ENCODE measurements at regions of chr2 and their contacts with region 1.

Region 1: DNA sequence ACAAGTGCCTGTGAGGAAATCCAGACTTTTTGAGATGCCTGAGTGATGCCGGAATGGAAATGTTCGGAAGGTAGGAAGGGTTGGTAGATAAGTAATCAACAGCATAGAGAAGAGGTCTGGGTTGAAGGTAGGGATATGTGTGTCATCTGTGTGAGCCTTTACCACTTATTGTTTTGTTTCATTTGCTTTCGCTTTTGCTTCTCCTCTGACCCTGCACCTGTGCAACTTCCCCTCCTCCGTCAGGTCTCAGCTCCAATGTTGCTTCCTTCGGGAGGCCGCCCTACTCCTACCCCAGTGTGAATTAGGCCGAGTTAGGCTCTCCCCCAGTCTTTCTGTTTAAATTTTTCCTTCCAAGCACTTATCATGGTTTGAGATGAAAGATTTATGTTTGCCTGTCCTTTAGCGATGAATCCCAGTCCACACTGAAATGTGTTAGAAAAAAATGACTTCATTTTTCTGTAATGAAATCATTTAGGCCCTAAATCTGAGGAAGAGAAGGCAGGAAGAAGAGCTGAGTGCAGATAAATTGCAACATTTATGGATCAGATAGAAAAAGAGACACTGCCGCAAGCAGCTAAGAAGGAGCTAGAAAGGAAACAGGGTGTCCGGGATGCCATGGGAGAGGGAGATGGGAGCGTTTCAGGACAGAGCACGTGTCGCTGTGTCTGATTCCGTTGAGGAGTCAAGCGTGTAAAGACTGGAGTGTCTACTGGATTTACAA is 139.6 kb upstream of the PELI1 start:
- DNase-seq: peak in 7 of 9 donors; percentile 14 to 54 (median 41)
- ATAC-seq: peak; percentile 82
- H3K4me3 ChIP-seq: peak overlapping the region; percentile 41
- H3K4me3 Mint-ChIP-seq: no peak overlapping the region
- H3K27ac ChIP-seq: peak overlapping the region; percentile 59
- H3K27ac Mint-ChIP-seq: no peak overlapping the region
- H3K4me1 ChIP-seq: peaks cover 8 to 12% of the 10 kb centered on the region in 2 donors
- H3K4me1 Mint-ChIP-seq: no peaks in the 10 kb centered on the region
- H3K27me3 ChIP-seq: no peaks in the 10 kb centered on the region
- H3K27me3 Mint-ChIP-seq: no peaks in the 10 kb centered on the region

Region 2: DNA sequence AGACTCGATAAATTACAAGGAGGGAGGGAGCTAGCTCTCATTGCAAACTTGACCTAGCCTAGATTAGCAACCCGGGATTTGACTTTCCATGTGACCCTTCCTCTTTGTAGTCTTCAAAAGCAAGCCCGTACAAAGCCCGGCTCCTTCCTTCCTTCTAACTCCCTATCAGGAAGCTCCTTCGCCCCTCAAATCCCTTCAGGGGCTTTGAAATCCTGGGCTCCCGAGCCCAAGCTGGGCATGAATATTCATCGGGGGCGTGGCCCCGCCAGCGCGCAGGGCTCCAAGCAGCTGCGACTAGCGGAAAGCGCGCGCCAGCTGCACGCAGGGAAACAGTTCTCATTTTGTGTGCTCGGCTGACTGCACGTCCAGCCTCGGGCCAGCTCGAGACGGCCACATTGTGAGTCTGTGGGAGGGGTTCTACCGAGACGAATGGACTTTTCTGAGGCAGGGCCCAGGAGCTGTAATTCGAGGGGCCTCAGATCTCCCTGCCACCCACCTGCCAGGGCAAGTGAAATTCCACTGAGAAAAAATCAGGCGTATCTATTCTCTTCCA is 55.6 kb before region 1 on chr2:
- CTCF ChIA-PET with region 1: no interaction called
- POLR2A ChIA-PET with region 1: no interaction called
- intact Hi-C with region 1: loop called in 1 of 2 experiments (anchors 5 kb)
- DNase-seq: peak in 8 of 9 donors; percentile 38 to 61 (median 57)
- ATAC-seq: peak; percentile 94
- H3K4me3 ChIP-seq: peak overlapping the region; percentile 48
- H3K4me3 Mint-ChIP-seq: peak overlapping the region; percentile 86 to 100 (median 95)
- H3K27ac ChIP-seq: peak overlapping the region; percentile 78
- H3K27ac Mint-ChIP-seq: peak overlapping the region; percentile 83 to 99 (median 95)
- H3K4me1 ChIP-seq: peaks cover 0 to 15% of the 10 kb centered on the region in 2 donors
- H3K4me1 Mint-ChIP-seq: peaks cover 16 to 45% (median 38%) of the 10 kb centered on the region in 7 donors
- H3K27me3 ChIP-seq: no peaks in the 10 kb centered on the region
- H3K27me3 Mint-ChIP-seq: no peaks in the 10 kb centered on the region

Region 3: DNA sequence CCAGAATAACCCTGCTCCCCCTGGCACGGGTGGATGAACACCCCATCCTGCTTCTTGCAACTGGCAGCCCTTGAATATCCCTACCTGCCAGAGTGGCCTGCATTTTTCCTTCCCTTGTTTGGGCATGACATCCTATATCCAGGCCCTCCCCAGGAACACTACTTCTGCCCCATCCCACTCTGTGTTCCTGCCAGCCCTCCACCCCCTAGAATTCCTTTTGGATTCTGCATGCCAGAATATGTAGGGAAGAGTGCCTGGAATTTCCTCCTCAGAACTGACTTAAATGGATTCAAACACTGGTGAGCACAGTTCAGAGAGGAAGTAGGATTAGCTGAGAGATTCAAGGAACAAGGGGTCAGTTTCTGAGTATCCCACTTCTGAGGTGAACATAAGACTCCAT is 16.1 kb before region 1 on chr2:
- CTCF ChIA-PET with region 1: no interaction called
- POLR2A ChIA-PET with region 1: interaction called, 3 read pairs
- intact Hi-C with region 1: loop called in 1 of 2 experiments (anchors 2 kb)
- DNase-seq: no peak
- ATAC-seq: no peak
- H3K4me3 ChIP-seq: no peak overlapping the region
- H3K4me3 Mint-ChIP-seq: no peak overlapping the region
- H3K27ac ChIP-seq: no peak overlapping the region
- H3K27ac Mint-ChIP-seq: peak overlapping the region in 1 of 9 donors; percentile 16
- H3K4me1 ChIP-seq: no peaks in the 10 kb centered on the region
- H3K4me1 Mint-ChIP-seq: peaks cover 0 to 14% (median under 1%) of the 10 kb centered on the region in 7 donors
- H3K27me3 ChIP-seq: no peaks in the 10 kb centered on the region
- H3K27me3 Mint-ChIP-seq: peaks cover 0 to 8% (median 0%) of the 10 kb centered on the region in 5 donors

Region 4: DNA sequence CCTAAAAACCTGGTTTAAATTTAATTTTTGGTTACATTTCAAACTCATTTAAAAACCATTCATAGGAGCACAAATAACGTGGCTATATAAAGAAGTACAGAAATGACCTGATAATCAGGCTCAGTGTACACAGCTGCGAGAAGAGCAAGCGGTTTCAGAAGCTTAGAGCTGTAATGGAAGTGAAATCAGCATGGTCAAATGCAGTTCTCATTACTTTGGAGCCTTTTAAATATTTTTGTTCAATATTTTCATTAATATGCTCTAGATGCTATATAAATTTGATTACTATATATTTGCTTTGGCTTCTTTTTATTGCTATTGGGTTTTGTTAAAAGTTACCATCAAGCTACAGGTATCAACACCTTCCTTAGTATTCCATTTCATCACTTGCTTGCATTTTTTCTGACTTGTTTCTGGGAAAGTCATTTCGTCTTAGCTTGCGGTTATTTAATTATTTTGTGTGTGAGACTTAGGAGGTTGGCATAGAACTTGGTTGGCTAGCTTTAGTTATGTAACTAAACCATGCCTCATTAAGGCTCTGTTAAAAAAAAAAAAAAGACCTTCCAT is 299.1 kb after region 1 on chr2:
- CTCF ChIA-PET with region 1: no interaction called
- POLR2A ChIA-PET with region 1: no interaction called
- intact Hi-C with region 1: no loop called
- DNase-seq: no peak
- ATAC-seq: no peak
- H3K4me3 ChIP-seq: no peak overlapping the region
- H3K4me3 Mint-ChIP-seq: no peak overlapping the region
- H3K27ac ChIP-seq: no peak overlapping the region
- H3K27ac Mint-ChIP-seq: no peak overlapping the region
- H3K4me1 ChIP-seq: no peaks in the 10 kb centered on the region
- H3K4me1 Mint-ChIP-seq: peaks cover 0 to 8% (median 5%) of the 10 kb centered on the region in 7 donors
- H3K27me3 ChIP-seq: no peaks in the 10 kb centered on the region
- H3K27me3 Mint-ChIP-seq: no peaks in the 10 kb centered on the region